Activated T-helper 1 cell treated with anti-CD3 and anti-CD28 coated beads, Interleukin-12 subunit alpha, Interleukin-12 subunit beta, Interleukin-2, Interleukin-4 antibody, amounts not matched to agents 30 ng/mL and 10 ng/mL and 1 ng/mL, durations not matched to agents 14 hours and 24 hours and 36 hours (primary cell): ENCODE measurements at regions of chr6 and their contacts with region 1.

Region 1: GRCh38 chr6:144931172-144932035 is 646.3 kb downstream of the UTRN start:
- DNase-seq: no peak
- H3K4me3 Mint-ChIP-seq: no peak overlapping the region
- H3K27ac Mint-ChIP-seq: no peak overlapping the region
- H3K4me1 Mint-ChIP-seq: no peaks in the 10 kb centered on the region
- H3K27me3 Mint-ChIP-seq: peaks cover 16% of the 10 kb centered on the region

Region 2: DNA sequence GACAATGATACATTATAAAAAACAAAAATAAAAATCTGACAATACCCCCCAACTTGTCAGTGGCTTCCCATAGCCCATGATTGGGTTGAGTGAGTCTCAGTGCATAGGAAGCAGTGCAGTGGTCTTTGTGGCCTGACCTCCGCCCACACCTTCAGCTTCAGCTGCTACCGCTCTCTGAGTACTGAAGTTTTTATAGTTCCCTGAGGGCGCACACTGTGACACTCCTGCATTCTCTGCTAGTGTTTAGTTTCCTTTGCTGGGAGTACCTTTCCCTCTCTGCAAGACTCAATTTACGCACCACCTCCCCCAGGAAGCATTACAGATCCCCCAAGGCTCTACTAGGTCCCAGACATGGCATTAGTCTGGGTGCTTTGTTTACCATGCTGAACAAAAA is 205.3 kb before region 1 on chr6:
- intact Hi-C with region 1: loop called (anchors 10 kb)
- DNase-seq: no peak
- H3K4me3 Mint-ChIP-seq: no peak overlapping the region
- H3K27ac Mint-ChIP-seq: no peak overlapping the region
- H3K4me1 Mint-ChIP-seq: peaks cover 54% of the 10 kb centered on the region
- H3K27me3 Mint-ChIP-seq: no peaks in the 10 kb centered on the region

Region 3: GRCh38 chr6:144778773-144779492 is 152.5 kb before region 1 on chr6:
- intact Hi-C with region 1: loop called (anchors 10 kb)
- DNase-seq: no peak
- H3K4me3 Mint-ChIP-seq: no peak overlapping the region
- H3K27ac Mint-ChIP-seq: no peak overlapping the region
- H3K4me1 Mint-ChIP-seq: no peaks in the 10 kb centered on the region
- H3K27me3 Mint-ChIP-seq: no peaks in the 10 kb centered on the region

Region 4: GRCh38 chr6:145028144-145028818 is 96.9 kb after region 1 on chr6:
- intact Hi-C with region 1: loop called (anchors 5 kb)
- DNase-seq: no peak
- H3K4me3 Mint-ChIP-seq: no peak overlapping the region
- H3K27ac Mint-ChIP-seq: no peak overlapping the region
- H3K4me1 Mint-ChIP-seq: peaks cover under 1% of the 10 kb centered on the region
- H3K27me3 Mint-ChIP-seq: peaks cover 28% of the 10 kb centered on the region